Body of pancreas (tissue), 4 donors: ENCODE measurements at regions of chr17 and their contacts with region 1.

Region 1: DNA sequence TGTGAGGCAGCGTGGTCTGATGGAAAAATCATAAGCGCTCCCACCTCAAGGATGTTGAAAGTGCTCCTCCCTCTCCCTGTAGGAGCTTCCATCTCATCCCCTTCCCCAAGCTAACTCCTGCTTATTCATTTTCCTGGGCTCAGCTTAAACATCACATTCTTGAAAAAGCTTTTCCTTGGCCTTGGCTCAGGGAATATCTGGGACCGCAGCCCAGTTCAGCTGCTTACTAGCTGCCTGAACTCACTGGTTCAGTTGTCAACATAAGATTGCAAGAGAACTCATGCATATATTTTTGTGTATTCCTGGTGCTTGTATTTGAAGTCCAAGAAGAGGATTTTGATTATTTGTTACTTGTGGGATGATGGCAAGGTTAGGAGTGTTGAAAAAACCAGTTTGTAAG is 91.5 kb downstream of the UTP18 start:
- DNase-seq: peak in 2 of 4 donors; percentile 12 to 29
- ATAC-seq: no peak
- H3K4me3 ChIP-seq: no peak overlapping the region
- H3K27ac ChIP-seq: no peak overlapping the region
- H3K4me1 ChIP-seq: no peaks in the 10 kb centered on the region
- H3K27me3 ChIP-seq: no peaks in the 10 kb centered on the region
- CTCF ChIP-seq: no peak
- POLR2A ChIP-seq: no peak

Region 2: GRCh38 chr17:51298508-51299371 is 53.1 kb before region 1 on chr17:
- intact Hi-C with region 1: no loop called
- DNase-seq: peak in 3 of 4 donors; percentile 11 to 22 (median 14)
- ATAC-seq: peak; percentile 42
- H3K4me3 ChIP-seq: no peak overlapping the region
- H3K27ac ChIP-seq: peak overlapping the region in 1 of 4 donors; percentile 52
- H3K4me1 ChIP-seq: peaks cover 15% of the 10 kb centered on the region
- H3K27me3 ChIP-seq: no peaks in the 10 kb centered on the region
- CTCF ChIP-seq: peak; percentile 43 to 74 (median 70)
- POLR2A ChIP-seq: no peak

Region 3: DNA sequence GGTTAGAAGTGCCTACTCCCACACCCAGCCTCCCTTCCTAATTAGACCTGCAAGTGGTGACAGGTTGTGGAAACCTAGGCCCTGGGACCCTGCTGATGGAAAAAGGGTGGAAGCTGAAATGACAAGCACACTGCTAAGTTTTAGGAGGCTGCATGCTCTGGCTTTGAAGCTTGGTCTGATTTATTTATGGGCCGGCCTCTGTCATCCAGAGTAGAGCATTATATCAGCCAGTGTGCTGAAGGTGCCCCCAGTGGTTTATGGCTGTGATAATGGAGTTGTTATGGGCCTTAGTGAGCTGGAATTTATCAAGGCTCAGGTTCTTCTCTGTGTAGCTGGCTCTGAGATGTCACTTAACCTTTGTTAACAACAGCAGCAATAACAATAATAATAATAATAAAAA is 51.0 kb after region 1 on chr17:
- intact Hi-C with region 1: loop called (anchors 10 kb)
- DNase-seq: no peak
- ATAC-seq: no peak
- H3K4me3 ChIP-seq: no peak overlapping the region
- H3K27ac ChIP-seq: no peak overlapping the region
- H3K4me1 ChIP-seq: no peaks in the 10 kb centered on the region
- H3K27me3 ChIP-seq: no peaks in the 10 kb centered on the region
- CTCF ChIP-seq: no peak
- POLR2A ChIP-seq: no peak